Activated T-helper 2 cell treated with anti-CD3 and anti-CD28 coated beads, Interferon-gamma antibody, Interleukin-2, Interleukin-4, amounts not matched to agents 10 μg/mL and 5 μg/mL and 100 μg/mL, durations not matched to agents 14 hours and 24 hours and 36 hours (primary cell): ENCODE measurements at regions of chr7 and their contacts with region 1.

Region 1: GRCh38 chr7:94449148-94449725 is 54.5 kb downstream of the COL1A2 start:
- DNase-seq: no peak
- H3K4me3 Mint-ChIP-seq: no peak overlapping the region
- H3K27ac Mint-ChIP-seq: no peak overlapping the region
- H3K4me1 Mint-ChIP-seq: no peaks in the 10 kb centered on the region
- H3K27me3 Mint-ChIP-seq: peaks cover 8% of the 10 kb centered on the region

Region 2: DNA sequence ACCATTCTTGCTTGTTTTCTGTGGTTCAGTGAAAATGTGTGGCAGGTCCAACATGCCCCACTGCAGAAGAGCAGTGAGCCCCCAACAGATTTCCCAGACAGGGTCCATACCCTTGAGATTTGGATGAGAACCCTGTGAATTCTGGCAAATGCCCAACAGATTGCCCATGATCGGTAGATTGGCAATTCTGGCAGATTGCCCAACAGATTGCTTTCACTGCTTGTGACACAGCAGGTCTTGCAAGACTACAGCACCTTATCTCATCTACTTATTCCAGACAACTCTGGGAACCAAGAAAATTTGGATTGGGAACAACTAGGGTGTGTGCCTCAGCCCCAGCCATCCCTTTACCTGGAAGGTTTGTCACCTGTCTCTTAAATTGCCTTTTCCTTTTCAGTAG is 198.3 kb before region 1 on chr7:
- intact Hi-C with region 1: no loop called
- DNase-seq: no peak
- H3K4me3 Mint-ChIP-seq: no peak overlapping the region
- H3K27ac Mint-ChIP-seq: no peak overlapping the region
- H3K4me1 Mint-ChIP-seq: no peaks in the 10 kb centered on the region
- H3K27me3 Mint-ChIP-seq: peaks cover 8% of the 10 kb centered on the region

Region 3: DNA sequence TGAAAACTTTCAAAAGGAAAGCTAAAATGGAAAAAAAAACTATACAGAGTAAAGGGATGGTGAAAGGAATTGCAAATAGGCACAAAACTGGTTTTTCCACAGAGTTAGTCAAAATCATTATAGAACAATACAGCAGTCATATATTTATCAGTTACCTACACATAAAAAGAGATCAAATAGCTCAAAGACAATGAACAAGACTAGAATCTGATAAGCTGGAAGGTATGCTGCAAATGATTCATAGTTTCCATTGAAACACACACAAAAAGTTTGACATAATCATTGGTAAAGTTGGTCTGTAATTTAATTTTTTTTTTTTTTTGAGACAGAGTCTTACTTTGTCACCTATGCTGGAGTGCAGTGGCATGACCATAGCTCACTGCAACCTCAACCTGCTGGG is 299.1 kb after region 1 on chr7:
- intact Hi-C with region 1: no loop called
- DNase-seq: no peak
- H3K4me3 Mint-ChIP-seq: no peak overlapping the region
- H3K27ac Mint-ChIP-seq: no peak overlapping the region
- H3K4me1 Mint-ChIP-seq: no peaks in the 10 kb centered on the region
- H3K27me3 Mint-ChIP-seq: no peaks in the 10 kb centered on the region

Region 4: GRCh38 chr7:95476904-95477594 is 1027.8 kb after region 1 on chr7:
- intact Hi-C with region 1: loop called (anchors 5 kb)
- DNase-seq: peak; percentile 34
- H3K4me3 Mint-ChIP-seq: no peak overlapping the region
- H3K27ac Mint-ChIP-seq: no peak overlapping the region
- H3K4me1 Mint-ChIP-seq: no peaks in the 10 kb centered on the region
- H3K27me3 Mint-ChIP-seq: peaks cover 10% of the 10 kb centered on the region